ENCODE measurements at regions of chr14 and their contacts with region 1.

Region 1: GRCh38 chr14:54549862-54550261 is 17.1 kb upstream of the SAMD4A start:
- DNase-seq: no peak
- ATAC-seq: no peak
- H3K4me3 ChIP-seq: no peak overlapping the region
- H3K27ac ChIP-seq: no peak overlapping the region
- H3K4me1 ChIP-seq: no peaks in the 10 kb centered on the region
- H3K27me3 ChIP-seq: no peaks in the 10 kb centered on the region
- CTCF ChIP-seq: no peak

Region 2: GRCh38 chr14:55777877-55778276 is 1228.0 kb after region 1 on chr14:
- CTCF ChIA-PET with region 1: no interaction called
- POLR2A ChIA-PET with region 1: interaction called, 12 read pairs
- in situ Hi-C with region 1: no loop called
- intact Hi-C with region 1: no loop called
- DNase-seq: no peak
- ATAC-seq: no peak
- H3K4me3 ChIP-seq: no peak overlapping the region
- H3K27ac ChIP-seq: no peak overlapping the region
- H3K4me1 ChIP-seq: no peaks in the 10 kb centered on the region
- H3K27me3 ChIP-seq: no peaks in the 10 kb centered on the region
- CTCF ChIP-seq: no peak